Activated CD4-positive, alpha-beta T cell treated with anti-CD3 and anti-CD28 coated beads for 36 hours (primary cell): ENCODE measurements at regions of chr10 and their contacts with region 1.

Region 1: GRCh38 chr10:132788180-132788830 is 2.4 kb upstream of the NKX6-2 start:
- DNase-seq: peak; percentile 26
- ATAC-seq: no peak
- H3K4me3 Mint-ChIP-seq: no peak overlapping the region
- H3K27ac Mint-ChIP-seq: no peak overlapping the region
- H3K4me1 Mint-ChIP-seq: no peaks in the 10 kb centered on the region
- H3K27me3 Mint-ChIP-seq: peaks cover 17% of the 10 kb centered on the region

Region 2: GRCh38 chr10:133230387-133231195 is 442.3 kb after region 1 on chr10:
- CTCF ChIA-PET with region 1: no interaction called
- POLR2A ChIA-PET with region 1: no interaction called
- intact Hi-C with region 1: loop called in 1 of 2 experiments (anchors 10 kb)
- DNase-seq: peak; percentile 43
- ATAC-seq: no peak
- H3K4me3 Mint-ChIP-seq: no peak overlapping the region
- H3K27ac Mint-ChIP-seq: no peak overlapping the region
- H3K4me1 Mint-ChIP-seq: peaks cover 17% of the 10 kb centered on the region
- H3K27me3 Mint-ChIP-seq: peaks cover 49% of the 10 kb centered on the region

Region 3: DNA sequence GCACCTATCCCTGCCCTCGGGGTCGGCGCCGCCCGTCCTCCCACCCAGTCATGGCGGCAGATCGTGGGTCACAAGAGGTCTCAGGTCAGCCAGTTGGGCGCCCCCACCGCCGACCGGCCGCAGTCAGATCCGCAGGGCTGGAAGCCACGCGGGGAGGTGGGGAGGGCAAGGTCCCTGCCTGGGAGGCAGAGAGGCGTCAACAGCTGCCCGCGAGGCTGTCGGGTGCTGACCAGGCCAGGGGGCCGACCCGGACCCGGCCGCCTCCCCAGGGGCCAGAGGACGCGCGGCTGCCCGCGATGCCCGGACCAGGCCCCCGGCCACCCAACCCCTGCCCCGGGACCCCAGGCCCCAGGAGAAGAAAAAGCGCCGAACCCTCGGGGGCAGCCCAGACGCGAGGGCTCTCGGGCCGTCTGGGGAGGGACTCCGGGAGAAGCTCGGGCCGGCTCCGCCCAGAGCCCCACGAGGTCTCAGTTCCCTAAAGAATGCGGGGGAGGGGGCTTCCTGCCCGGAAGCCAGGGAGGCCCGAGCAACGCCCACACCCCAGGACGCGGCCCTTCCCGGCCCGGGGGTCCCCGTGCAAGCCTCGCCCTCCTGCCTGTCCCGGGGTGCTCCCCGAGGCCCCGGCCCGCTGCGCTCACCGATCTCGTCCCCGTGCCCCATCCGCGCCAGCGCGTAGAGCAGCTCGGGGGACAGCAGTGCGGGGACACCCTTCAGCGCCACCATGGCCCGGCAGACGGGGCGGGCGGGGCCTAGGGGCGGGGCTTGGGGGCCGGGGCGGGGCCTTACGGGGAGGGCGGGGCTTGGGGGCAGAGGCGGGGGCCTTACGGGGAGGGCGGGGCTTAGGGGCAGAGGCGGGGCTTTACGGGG is 569.2 kb after region 1 on chr10 and contains the start of gene FUOM:
- CTCF ChIA-PET with region 1: no interaction called
- POLR2A ChIA-PET with region 1: no interaction called
- intact Hi-C with region 1: no loop called
- DNase-seq: peak; percentile 87
- ATAC-seq: peak; percentile 92
- H3K4me3 Mint-ChIP-seq: peak within 1 kb of the TSS; percentile 77
- H3K27ac Mint-ChIP-seq: peak within 1 kb of the TSS; percentile 60
- H3K4me1 Mint-ChIP-seq: peaks cover 7% of the 10 kb centered on the region
- H3K27me3 Mint-ChIP-seq: no peaks in the 10 kb centered on the region
- total RNA-seq, gene FUOM: 28.3 to 37.0 TPM